Gastrocnemius medialis (tissue), 4 donors: ENCODE measurements at regions of chr1 and their contacts with region 1.

Region 1: GRCh38 chr1:62131093-62131725 is 63.4 kb upstream of the L1TD1 start:
- DNase-seq: peak in 1 of 2 donors; percentile 29
- ATAC-seq: peak in 1 of 2 donors; percentile 82
- H3K4me3 ChIP-seq: no peak overlapping the region
- H3K27ac ChIP-seq: no peak overlapping the region
- H3K4me1 ChIP-seq: no peaks in the 10 kb centered on the region
- H3K27me3 ChIP-seq: no peaks in the 10 kb centered on the region
- CTCF ChIP-seq: peak in 4 of 5 experiments; percentile 44 to 66 (median 55)
- POLR2A ChIP-seq: no peak

Region 2: DNA sequence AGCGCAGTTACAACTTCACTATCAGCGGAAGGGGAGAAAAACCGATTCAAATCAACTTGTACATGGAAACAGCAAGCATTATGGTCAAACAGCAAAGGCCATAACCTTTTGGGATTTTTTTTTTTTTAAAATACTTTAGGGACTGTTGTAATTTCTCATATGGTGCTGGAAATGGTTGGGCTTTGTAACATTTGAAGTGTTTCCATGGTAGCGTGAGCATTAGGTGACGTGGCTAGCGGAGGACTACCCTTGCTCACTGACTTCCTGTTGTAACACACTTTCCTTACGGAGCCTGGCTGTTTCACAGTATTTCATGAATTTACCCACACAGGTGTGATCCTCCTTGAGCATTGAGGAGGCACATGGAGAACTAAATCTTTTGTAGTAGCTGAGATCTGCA is 675.8 kb before region 1 on chr1:
- in situ Hi-C with region 1: no loop called
- intact Hi-C with region 1: no loop called
- DNase-seq: no peak
- ATAC-seq: no peak
- H3K4me3 ChIP-seq: no peak overlapping the region
- H3K27ac ChIP-seq: no peak overlapping the region
- H3K4me1 ChIP-seq: peaks cover 39 to 41% of the 10 kb centered on the region in 2 donors
- H3K27me3 ChIP-seq: no peaks in the 10 kb centered on the region
- CTCF ChIP-seq: no peak
- POLR2A ChIP-seq: no peak

Region 3: DNA sequence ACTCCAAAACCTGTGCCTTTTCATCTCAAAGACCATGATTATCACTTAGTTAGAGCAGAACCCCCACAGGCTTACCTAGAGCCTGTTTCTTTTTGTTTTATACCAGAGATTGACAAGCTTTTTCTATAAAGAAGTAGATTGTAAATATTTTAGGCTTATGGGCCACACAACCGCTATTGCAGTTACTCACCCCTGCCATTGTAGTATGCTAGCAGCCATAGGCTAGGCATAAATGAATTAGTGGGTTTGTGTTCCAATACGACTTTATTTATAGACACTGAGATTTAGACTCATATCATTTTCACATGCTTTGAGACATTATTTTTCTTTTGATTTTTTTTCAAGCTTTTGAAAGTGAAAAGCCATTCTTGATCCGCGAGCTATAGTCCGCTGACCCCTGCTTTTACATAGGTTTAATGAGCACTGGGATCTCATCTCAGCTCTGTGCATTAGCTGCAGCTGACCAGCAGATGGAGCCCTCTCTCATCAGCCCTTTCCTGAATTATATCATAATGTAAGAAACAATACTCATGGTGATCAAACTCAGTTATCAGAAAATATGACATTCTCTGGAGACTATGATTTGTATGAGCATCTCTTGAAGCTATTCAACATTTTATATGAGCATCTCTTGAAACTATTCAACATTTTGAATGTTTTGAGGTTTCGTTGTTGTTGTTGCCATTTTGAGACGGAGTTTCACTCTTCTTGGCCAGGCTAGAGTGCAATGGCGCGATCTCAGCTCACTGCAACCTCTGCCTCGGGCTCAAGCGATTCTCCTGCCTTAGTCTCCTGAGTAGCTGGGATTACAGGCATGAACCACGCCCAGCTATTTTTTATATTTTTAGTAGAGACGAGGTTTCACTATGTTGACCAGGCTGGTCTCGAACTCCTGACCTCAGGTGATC is 48.5 kb before region 1 on chr1:
- in situ Hi-C with region 1: loop called in 1 of 4 experiments (anchors 10 kb)
- intact Hi-C with region 1: loop called (anchors 5 kb)
- DNase-seq: no peak
- ATAC-seq: peak; percentile 73 to 77
- H3K4me3 ChIP-seq: no peak overlapping the region
- H3K27ac ChIP-seq: no peak overlapping the region
- H3K4me1 ChIP-seq: no peaks in the 10 kb centered on the region
- H3K27me3 ChIP-seq: no peaks in the 10 kb centered on the region
- CTCF ChIP-seq: peak; percentile 55 to 88 (median 82)
- POLR2A ChIP-seq: no peak

Region 4: GRCh38 chr1:62241377-62242131 is 110.3 kb after region 1 on chr1:
- in situ Hi-C with region 1: no loop called
- intact Hi-C with region 1: no loop called
- DNase-seq: no peak
- ATAC-seq: no peak
- H3K4me3 ChIP-seq: no peak overlapping the region
- H3K27ac ChIP-seq: no peak overlapping the region
- H3K4me1 ChIP-seq: no peaks in the 10 kb centered on the region
- H3K27me3 ChIP-seq: no peaks in the 10 kb centered on the region
- CTCF ChIP-seq: no peak
- POLR2A ChIP-seq: no peak